ENCODE measurements at regions of chr1 and their contacts with region 1.

Region 1: DNA sequence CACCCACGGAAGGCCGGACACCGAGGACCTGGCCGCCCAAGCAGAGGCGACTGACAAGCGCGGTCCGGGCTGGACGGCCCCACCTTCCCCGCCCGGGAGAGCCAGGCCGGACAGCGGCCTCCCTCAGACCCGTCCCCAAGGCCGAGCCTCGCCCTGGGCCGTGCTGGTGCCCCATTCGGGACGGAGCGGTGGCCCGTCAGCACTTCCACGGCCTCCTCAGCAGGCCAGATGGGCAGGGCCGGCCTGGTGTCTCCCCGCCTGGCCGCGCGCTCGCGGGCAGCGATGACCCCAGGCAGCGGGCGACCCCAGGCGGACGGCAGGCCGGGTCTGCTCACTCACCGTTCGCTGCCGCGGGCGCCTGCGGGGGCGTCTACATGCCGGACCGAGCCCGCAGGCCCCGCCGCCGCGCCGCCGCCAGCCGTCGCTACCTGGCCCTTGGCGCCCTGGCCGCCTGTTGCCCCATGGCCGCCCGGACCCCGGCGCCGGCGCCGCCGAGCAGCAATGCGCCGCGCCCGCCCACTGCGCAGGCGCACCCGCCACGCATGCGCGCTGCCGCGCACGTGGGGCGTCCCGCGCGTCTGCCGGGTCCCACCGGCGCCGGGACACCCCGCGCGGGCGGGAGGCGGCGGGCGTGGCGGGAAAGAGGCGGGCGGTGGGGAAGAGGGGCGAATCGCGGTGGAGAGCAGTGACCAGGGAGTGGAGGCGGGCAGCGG is at the start of gene NADK:
- DNase-seq: peak; percentile 53
- H3K4me3 ChIP-seq: peak within 1 kb of the TSS; percentile 71 to 97 (median 87)
- H3K27ac ChIP-seq: peak within 1 kb of the TSS; percentile 49
- H3K4me1 ChIP-seq: peaks cover 31% of the 10 kb centered on the region
- H3K27me3 ChIP-seq: no peaks in the 10 kb centered on the region
- CTCF ChIP-seq: no peak
- total RNA-seq, gene NADK: 34.2 to 67.8 TPM

Region 2: DNA sequence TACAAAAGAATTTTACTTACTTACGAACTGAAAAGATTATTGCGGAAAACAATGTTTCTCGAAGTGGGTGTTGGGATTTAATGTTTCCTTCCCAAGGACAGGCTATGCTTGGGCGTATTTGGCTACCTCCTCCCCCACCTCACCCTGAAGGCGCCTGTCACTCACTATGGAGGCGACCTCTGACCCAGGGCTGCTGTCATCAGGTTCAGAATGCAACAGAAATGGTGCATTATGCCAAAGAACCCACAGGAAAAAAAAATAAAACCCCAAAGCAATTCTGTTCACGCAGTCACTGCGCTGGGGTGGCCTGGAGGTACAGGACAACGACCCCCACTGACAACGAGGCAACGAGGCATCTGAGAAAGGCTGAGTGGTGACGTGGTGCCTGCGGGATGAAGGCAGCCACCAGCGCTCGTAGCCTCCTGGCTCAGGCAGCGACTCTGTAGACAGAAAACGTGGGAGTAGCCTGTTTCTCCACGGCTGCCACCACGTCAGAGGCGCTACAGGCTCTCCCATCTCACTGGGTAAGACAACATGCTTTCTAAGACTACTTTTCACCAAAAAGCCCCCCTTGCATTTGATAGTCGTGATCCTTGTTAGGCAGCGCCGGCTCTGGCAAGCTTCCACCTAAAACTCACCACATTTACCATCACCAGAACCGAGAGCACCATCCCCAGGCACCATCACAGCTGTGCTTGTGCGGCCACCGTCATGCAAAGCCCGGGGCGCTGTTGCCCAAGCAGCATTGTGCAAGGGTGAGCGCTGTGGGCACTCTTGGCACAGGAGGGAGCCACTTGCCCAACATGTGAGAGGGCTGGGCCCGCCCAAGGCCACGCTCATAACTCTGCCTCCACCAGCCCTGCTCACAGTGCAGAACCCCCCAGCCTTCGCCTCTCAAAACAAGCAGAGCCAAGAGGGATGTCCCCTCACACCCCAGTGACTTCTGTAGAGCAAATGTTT is 14.2 kb before region 1 on chr1:
- CTCF ChIA-PET with region 1: no interaction called
- dilution Hi-C with region 1: no loop called
- in situ Hi-C with region 1: no loop called
- intact Hi-C with region 1: loop called (anchors 1 kb)
- DNase-seq: peak; percentile 94
- H3K4me3 ChIP-seq: no peak overlapping the region
- H3K27ac ChIP-seq: no peak overlapping the region
- H3K4me1 ChIP-seq: peaks cover 19% of the 10 kb centered on the region
- H3K27me3 ChIP-seq: no peaks in the 10 kb centered on the region
- CTCF ChIP-seq: peak in 1 of 2 donors; percentile 45

Measured in mammary epithelial cell (primary cell).